Activated CD4-positive, alpha-beta memory T cell treated with anti-CD3 and anti-CD28 coated beads for 36 hours (primary cell): ENCODE measurements at regions of chr1 and their contacts with region 1.

Region 1: DNA sequence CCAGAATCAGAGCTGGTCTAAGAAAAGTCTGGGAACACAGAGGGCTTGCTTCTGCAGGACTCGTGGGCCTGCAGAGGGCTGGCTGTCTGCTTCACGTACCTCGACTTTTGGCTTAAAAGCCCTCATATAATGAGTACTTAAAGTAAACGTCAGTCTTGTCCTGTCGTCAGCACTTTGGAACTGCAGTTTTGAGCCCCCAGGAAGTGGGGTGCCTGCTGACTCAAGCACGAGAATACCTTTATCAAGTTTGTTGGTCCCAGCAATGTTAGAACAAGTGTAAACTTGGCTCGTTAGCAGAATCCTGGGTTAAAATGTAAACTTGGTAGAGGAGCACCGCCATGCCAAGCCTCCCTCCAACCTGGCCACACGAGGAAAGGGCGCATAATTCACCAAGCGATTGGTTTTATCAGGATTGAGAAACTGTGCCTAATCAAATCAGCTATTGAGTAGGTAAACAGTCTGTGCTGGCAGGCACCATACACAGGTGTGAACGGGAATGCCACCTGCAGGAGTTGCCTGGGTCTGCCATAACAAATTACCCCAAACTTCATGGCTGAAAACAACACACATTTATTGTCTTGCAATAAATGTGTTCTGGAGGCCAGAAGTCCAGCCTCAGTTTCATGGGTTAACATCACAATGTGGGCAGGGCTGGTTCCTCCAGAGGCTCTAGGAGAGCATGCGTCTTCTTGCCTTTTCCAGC is 45.0 kb upstream of the FHAD1 start:
- DNase-seq: no peak
- H3K4me3 Mint-ChIP-seq: no peak overlapping the region
- H3K27ac Mint-ChIP-seq: no peak overlapping the region
- H3K4me1 Mint-ChIP-seq: no peaks in the 10 kb centered on the region
- H3K27me3 Mint-ChIP-seq: no peaks in the 10 kb centered on the region

Region 2: GRCh38 chr1:15134285-15134684 is 67.7 kb before region 1 on chr1:
- CTCF ChIA-PET with region 1: no interaction called
- POLR2A ChIA-PET with region 1: no interaction called
- intact Hi-C with region 1: no loop called
- DNase-seq: no peak
- H3K4me3 Mint-ChIP-seq: no peak overlapping the region
- H3K27ac Mint-ChIP-seq: no peak overlapping the region
- H3K4me1 Mint-ChIP-seq: no peaks in the 10 kb centered on the region
- H3K27me3 Mint-ChIP-seq: peaks cover 33% of the 10 kb centered on the region

Region 3: GRCh38 chr1:15168479-15168878 is 33.5 kb before region 1 on chr1:
- CTCF ChIA-PET with region 1: no interaction called
- POLR2A ChIA-PET with region 1: no interaction called
- intact Hi-C with region 1: loop called (anchors 5 kb)
- DNase-seq: no peak
- H3K4me3 Mint-ChIP-seq: no peak overlapping the region
- H3K27ac Mint-ChIP-seq: no peak overlapping the region
- H3K4me1 Mint-ChIP-seq: no peaks in the 10 kb centered on the region
- H3K27me3 Mint-ChIP-seq: peaks cover 15% of the 10 kb centered on the region

Region 4: DNA sequence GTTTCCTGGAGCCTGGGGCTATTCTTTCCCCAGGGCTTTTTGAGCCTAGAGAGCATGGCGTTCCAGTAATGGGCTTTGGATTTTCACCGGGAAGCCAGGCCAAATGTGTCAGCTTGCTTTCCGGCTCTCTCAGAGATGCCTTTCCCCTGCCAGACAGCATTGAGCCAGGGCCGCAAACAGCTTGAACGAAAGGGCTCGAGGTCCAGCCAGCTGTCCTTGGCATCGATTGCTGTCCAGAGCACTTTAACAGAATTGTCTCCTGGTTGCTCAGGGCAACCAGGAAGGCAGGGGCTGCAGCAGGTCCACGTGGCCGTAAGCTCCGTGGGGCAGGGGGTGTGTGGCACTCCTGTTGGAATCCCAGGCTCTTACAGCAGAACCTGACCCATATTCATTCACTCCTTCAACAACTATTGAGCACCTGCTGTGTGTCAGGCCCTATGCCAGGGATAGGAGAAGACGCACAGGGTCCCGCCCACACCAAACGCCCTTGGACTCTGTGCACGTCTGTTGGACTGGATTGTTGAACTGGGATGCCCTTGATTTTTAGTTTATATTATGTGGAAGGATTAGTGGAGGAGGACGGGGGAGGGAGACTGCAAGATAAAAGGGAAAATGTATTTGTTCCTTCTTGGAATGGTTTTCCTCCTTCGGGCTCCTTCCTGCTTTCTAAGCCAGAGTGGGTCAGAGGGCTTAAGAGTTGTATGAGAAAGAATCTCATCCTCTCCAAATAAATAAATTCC is 169.0 kb after region 1 on chr1:
- CTCF ChIA-PET with region 1: no interaction called
- POLR2A ChIA-PET with region 1: no interaction called
- intact Hi-C with region 1: no loop called
- DNase-seq: no peak
- H3K4me3 Mint-ChIP-seq: no peak overlapping the region
- H3K27ac Mint-ChIP-seq: no peak overlapping the region
- H3K4me1 Mint-ChIP-seq: no peaks in the 10 kb centered on the region
- H3K27me3 Mint-ChIP-seq: no peaks in the 10 kb centered on the region

Region 5: GRCh38 chr1:15526490-15527339 is 324.7 kb after region 1 on chr1 and contains the start of gene DNAJC16:
- CTCF ChIA-PET with region 1: no interaction called
- POLR2A ChIA-PET with region 1: no interaction called
- intact Hi-C with region 1: no loop called
- DNase-seq: peak; percentile 99
- H3K4me3 Mint-ChIP-seq: peak within 1 kb of the TSS; percentile 89
- H3K27ac Mint-ChIP-seq: peak within 1 kb of the TSS; percentile 99
- H3K4me1 Mint-ChIP-seq: peaks cover 50% of the 10 kb centered on the region
- H3K27me3 Mint-ChIP-seq: no peaks in the 10 kb centered on the region
- total RNA-seq, gene DNAJC16: 10.0 to 10.4 TPM